ENCODE measurements at regions of chr19 and their contacts with region 1.

Region 1: GRCh38 chr19:47243776-47244547 is 12.4 kb upstream of the CCDC9 start:
- DNase-seq: peak; percentile 96
- ATAC-seq: peak; percentile 84
- H3K4me3 Mint-ChIP-seq: peak overlapping the region; percentile 78
- H3K27ac Mint-ChIP-seq: peak overlapping the region; percentile 91
- H3K4me1 Mint-ChIP-seq: peaks cover 36% of the 10 kb centered on the region
- H3K27me3 Mint-ChIP-seq: peaks cover 3% of the 10 kb centered on the region

Region 2: GRCh38 chr19:47130591-47131227 is 113.3 kb before region 1 on chr19 and contains the start of gene SAE1:
- CTCF ChIA-PET with region 1: interaction called, 65 read pairs
- DNase-seq: peak; percentile 95
- ATAC-seq: peak; percentile 90
- H3K4me3 Mint-ChIP-seq: peak within 1 kb of the TSS; percentile 96
- H3K27ac Mint-ChIP-seq: peak within 1 kb of the TSS; percentile 98
- H3K4me1 Mint-ChIP-seq: peaks cover 46% of the 10 kb centered on the region
- H3K27me3 Mint-ChIP-seq: no peaks in the 10 kb centered on the region
- total RNA-seq, gene SAE1: 153 to 171 TPM

Region 3: DNA sequence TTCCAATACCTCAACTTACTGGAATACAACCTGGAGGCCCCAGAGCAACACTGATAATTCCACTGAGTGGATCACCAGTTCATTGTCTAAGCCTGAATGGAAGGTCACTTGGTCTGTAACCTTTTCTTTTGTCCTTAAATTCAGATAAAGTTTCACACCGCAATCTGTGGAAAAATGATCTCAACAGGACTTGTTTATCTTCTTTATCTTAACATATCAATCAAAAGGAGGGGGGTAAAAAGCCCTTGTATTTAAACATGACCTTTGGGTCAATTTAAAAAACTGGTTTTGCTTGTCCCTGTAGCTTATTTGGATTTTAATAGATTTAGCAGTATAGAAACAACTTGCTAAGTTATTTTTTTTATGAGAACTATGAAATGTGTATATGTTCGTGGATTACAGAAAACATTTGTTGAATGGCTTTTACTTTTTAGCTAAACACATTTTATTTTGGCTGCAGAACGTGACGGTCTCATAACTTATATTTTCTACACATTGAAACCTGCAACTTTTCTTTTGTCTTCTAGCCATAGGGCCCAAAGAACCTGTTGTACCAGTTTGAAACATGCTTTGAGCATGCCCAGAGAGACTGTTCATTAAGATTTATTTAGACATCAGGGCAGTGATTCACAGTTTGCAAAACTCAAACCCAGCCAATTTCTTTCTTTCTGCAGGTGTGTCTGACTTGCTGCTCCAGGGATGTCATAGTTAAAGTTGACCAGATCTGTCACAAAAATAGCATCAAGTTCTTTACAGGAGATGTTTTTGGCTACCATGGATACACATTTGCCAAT is 91.5 kb before region 1 on chr19:
- CTCF ChIA-PET with region 1: interaction called, 106 read pairs
- DNase-seq: no peak
- ATAC-seq: no peak
- H3K4me3 Mint-ChIP-seq: no peak overlapping the region
- H3K27ac Mint-ChIP-seq: peak overlapping the region; percentile 42
- H3K4me1 Mint-ChIP-seq: peaks cover 27% of the 10 kb centered on the region
- H3K27me3 Mint-ChIP-seq: no peaks in the 10 kb centered on the region

Region 4: DNA sequence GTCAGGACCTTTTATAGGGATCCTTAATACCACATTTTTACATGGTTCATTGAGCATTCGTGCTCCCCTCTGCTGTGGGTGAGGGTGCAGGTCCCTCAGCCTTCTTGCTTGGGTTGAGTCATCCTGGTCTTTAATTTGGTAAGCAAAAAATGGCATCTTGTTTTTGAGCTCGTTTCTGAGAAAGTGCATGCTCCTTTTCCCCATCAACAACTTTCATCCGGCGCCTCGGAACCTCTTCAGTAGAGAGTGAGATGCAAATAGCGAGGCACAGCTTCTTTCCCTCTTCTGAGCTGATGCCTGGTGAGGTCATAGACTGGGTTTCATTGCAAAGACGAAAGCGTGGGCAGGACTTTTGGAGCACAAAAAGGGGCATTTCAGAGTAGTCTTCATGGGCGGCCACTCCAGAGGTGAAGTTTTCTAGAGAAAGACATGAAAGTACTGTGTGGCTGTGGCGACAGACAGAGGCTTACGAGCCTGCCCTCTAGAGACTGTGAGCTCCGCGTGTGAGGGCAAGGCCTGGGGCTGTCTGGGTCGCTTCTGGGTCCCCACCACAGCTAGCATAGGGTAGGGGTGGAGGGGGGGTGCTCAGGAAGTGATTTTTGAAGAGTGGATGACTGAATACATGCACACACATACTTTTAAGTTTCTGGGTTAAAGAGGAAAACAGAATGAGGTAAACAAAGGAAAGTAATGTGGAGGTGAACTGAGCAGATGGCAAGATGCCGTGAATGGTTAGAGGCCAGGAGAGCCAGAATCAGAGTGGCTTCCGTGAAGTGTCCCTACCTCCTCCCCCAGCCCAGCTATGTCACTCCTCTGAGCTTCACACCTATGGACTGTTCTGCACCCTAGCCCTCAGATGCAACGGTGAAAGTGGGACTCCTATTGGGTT is 57.3 kb before region 1 on chr19:
- CTCF ChIA-PET with region 1: interaction called, 22 read pairs
- DNase-seq: peak; percentile 86
- ATAC-seq: peak; percentile 78
- H3K4me3 Mint-ChIP-seq: peak overlapping the region; percentile 31
- H3K27ac Mint-ChIP-seq: peak overlapping the region; percentile 88
- H3K4me1 Mint-ChIP-seq: peaks cover 73% of the 10 kb centered on the region
- H3K27me3 Mint-ChIP-seq: no peaks in the 10 kb centered on the region

Region 5: DNA sequence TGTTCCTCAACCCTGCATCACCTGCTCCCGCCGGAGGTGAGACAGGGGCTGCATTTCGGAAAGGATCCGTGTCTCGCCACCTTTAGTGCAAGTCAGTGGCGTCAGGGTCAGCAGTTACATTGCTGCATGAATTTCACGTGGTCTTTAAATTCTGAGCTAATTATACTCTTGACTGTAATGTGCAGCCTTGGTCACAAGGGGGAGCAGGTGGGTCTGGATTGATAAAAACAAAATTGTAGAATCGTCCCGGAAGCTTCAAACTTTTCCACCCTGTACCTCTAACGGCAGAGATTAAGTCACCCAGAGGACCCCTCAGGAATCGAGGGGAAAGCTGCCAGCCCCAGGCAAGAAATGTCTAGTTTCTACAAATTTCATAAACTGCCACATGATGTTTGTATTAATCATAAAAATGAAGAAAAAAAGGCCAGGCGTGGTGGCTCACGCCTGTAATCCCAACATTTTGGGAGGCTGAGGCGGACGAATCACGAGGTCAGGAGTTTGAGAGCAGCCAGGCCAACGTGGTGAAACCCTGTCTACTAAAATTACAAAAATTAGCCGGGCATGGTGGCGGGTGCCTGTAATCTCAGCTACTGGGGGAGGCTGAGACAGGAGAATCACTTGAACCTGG is 33.2 kb before region 1 on chr19:
- CTCF ChIA-PET with region 1: interaction called, 466 read pairs
- DNase-seq: peak; percentile 90
- ATAC-seq: peak; percentile 85
- H3K4me3 Mint-ChIP-seq: no peak overlapping the region
- H3K27ac Mint-ChIP-seq: peak overlapping the region; percentile 92
- H3K4me1 Mint-ChIP-seq: peaks cover 11% of the 10 kb centered on the region
- H3K27me3 Mint-ChIP-seq: no peaks in the 10 kb centered on the region

Region 6: GRCh38 chr19:47231215-47231984 is 12.6 kb before region 1 on chr19:
- CTCF ChIA-PET with region 1: interaction called, 136 read pairs
- DNase-seq: peak; percentile 94
- ATAC-seq: peak; percentile 60
- H3K4me3 Mint-ChIP-seq: peak overlapping the region; percentile 71
- H3K27ac Mint-ChIP-seq: peak overlapping the region; percentile 80
- H3K4me1 Mint-ChIP-seq: peaks cover 27% of the 10 kb centered on the region
- H3K27me3 Mint-ChIP-seq: peaks cover 8% of the 10 kb centered on the region

Region 7: GRCh38 chr19:47273313-47273977 is 29.5 kb after region 1 on chr19:
- CTCF ChIA-PET with region 1: interaction called, 10 read pairs
- DNase-seq: peak; percentile 97
- ATAC-seq: peak; percentile 81
- H3K4me3 Mint-ChIP-seq: peak overlapping the region; percentile 94
- H3K27ac Mint-ChIP-seq: peak overlapping the region; percentile 98
- H3K4me1 Mint-ChIP-seq: peaks cover 18% of the 10 kb centered on the region
- H3K27me3 Mint-ChIP-seq: no peaks in the 10 kb centered on the region